Naive thymus-derived CD4-positive, alpha-beta T cell (primary cell): ENCODE measurements at regions of chr11 and their contacts with region 1.

Region 1: GRCh38 chr11:128026596-128026995 is 560.8 kb downstream of the ETS1 start:
- DNase-seq: no peak
- ATAC-seq: peak; percentile 34
- H3K4me3 ChIP-seq: no peak overlapping the region
- H3K4me3 Mint-ChIP-seq: no peak overlapping the region
- H3K27ac ChIP-seq: no peak overlapping the region
- H3K27ac Mint-ChIP-seq: peak overlapping the region in 1 of 9 donors; percentile 12
- H3K4me1 ChIP-seq: peaks cover 0 to under 1% of the 10 kb centered on the region in 2 donors
- H3K4me1 Mint-ChIP-seq: peaks cover 0 to 5% (median 3%) of the 10 kb centered on the region in 7 donors
- H3K27me3 ChIP-seq: no peaks in the 10 kb centered on the region
- H3K27me3 Mint-ChIP-seq: peaks cover 0 to 37% (median 2%) of the 10 kb centered on the region in 5 donors

Region 2: DNA sequence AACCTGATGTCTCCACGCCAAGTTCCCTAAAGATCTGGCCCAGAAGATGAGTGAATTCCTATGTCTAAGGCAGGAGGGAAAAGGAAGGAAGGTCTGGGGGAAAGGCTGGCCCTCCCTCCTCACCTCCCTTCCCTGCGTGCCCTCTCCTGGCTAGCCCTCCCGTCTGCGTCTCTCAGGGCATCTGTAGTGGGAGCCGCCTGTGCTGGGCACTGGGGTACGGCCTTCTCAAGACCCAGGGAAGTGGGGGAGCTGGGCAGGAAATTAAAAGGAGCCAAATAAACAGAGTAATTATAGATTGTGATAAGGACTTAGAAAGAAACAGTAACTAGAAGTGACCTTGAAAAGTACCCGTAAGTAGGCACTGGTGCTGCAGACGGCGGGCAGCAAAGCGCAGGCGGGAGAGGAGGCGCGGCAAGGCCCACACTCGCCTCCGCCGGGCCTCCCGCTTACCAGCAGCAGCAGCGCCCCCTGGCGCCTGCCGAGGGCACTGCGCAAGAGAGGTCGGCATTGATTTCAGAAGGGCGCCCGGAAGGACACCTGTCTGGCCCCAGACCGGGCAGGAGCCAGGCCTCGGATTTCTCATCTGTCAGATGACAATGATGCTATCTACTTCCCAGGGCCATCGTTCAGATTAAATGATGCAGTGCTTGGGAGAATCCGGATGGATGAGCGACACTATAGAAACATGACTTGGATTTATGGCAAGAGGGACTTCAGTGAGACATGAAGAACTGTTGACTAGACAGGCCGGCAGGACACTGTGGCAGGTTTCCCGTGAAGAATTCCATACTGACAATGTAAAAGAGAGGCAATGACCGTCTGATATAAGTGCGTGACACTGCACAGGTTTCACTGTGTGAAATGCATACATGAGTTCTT is 833.2 kb after region 1 on chr11:
- CTCF ChIA-PET with region 1: no interaction called
- POLR2A ChIA-PET with region 1: no interaction called
- intact Hi-C with region 1: loop called (anchors 1 kb)
- DNase-seq: peak; percentile 55 to 83 (median 66)
- ATAC-seq: peak; percentile 95
- H3K4me3 ChIP-seq: no peak overlapping the region
- H3K4me3 Mint-ChIP-seq: peak overlapping the region in 3 of 10 donors; percentile 12 to 26 (median 18)
- H3K27ac ChIP-seq: no peak overlapping the region
- H3K27ac Mint-ChIP-seq: no peak overlapping the region
- H3K4me1 ChIP-seq: peaks cover 0 to 4% of the 10 kb centered on the region in 2 donors
- H3K4me1 Mint-ChIP-seq: peaks cover 0 to 9% (median 5%) of the 10 kb centered on the region in 7 donors
- H3K27me3 ChIP-seq: no peaks in the 10 kb centered on the region
- H3K27me3 Mint-ChIP-seq: peaks cover 0 to 16% (median 0%) of the 10 kb centered on the region in 5 donors

Region 3: DNA sequence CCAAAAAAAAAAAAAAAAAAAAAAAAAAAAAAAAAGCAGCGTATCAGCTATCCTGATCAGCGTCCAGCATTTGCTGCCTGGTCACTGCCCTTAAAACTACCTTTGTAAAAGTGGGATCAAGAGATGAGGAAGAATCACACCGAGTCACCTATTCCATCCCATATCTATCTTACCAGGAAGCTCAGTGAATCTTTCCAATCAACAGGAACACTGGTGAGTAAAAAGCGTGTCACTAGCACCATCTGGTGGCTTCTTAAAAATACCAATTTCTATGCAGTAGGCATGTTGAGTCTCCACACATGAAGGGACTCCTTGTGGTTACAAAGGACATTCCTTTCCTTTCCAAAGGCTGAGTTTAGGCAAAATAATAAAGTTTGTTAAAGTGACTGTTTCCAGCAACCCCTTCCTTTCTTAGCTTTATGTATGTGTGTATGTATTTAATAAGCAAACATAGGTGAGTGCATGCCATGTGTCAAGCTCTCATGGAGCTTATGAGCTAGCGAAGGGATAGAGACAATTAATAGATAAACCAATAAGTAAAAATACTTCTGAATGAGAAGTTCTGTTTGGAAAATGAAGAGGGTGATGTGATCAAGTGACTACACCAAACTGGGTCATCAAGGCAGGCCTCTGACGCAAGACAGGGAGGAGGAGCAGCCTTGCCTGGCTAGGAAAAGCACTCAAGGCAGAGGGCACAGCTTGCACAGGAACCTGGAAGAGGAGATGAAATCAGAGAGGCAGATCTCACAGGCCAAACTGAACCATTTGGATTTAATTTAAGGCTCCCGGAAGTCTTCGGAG is 930.0 kb after region 1 on chr11:
- CTCF ChIA-PET with region 1: no interaction called
- POLR2A ChIA-PET with region 1: no interaction called
- intact Hi-C with region 1: loop called (anchors 1 to 10 kb)
- DNase-seq: peak in 6 of 9 donors; percentile 10 to 48 (median 34)
- ATAC-seq: peak; percentile 60
- H3K4me3 ChIP-seq: no peak overlapping the region
- H3K4me3 Mint-ChIP-seq: peak overlapping the region in 4 of 10 donors; percentile 15 to 52 (median 30)
- H3K27ac ChIP-seq: no peak overlapping the region
- H3K27ac Mint-ChIP-seq: no peak overlapping the region
- H3K4me1 ChIP-seq: no peaks in the 10 kb centered on the region
- H3K4me1 Mint-ChIP-seq: peaks cover 2 to 6% (median 4%) of the 10 kb centered on the region in 7 donors
- H3K27me3 ChIP-seq: no peaks in the 10 kb centered on the region
- H3K27me3 Mint-ChIP-seq: peaks cover 0 to 33% (median 8%) of the 10 kb centered on the region in 5 donors

Region 4: GRCh38 chr11:129815596-129816461 is 1789.2 kb after region 1 on chr11 and contains the start of gene TMEM45B:
- CTCF ChIA-PET with region 1: no interaction called
- POLR2A ChIA-PET with region 1: no interaction called
- intact Hi-C with region 1: no loop called
- DNase-seq: peak; percentile 27 to 57 (median 45)
- ATAC-seq: peak; percentile 38
- H3K4me3 ChIP-seq: peak within 1 kb of the TSS; percentile 54
- H3K4me3 Mint-ChIP-seq: peak within 1 kb of the TSS; percentile 83 to 91 (median 88)
- H3K27ac ChIP-seq: peak within 1 kb of the TSS; percentile 31
- H3K27ac Mint-ChIP-seq: peak within 1 kb of the TSS; percentile 84 to 99 (median 95)
- H3K4me1 ChIP-seq: peaks cover 5 to 9% of the 10 kb centered on the region in 2 donors
- H3K4me1 Mint-ChIP-seq: peaks cover 29 to 79% (median 61%) of the 10 kb centered on the region in 7 donors
- H3K27me3 ChIP-seq: no peaks in the 10 kb centered on the region
- H3K27me3 Mint-ChIP-seq: peaks cover 0 to 75% (median 17%) of the 10 kb centered on the region in 5 donors
- total RNA-seq, gene TMEM45B: 2.3 to 40.8 (median 3.6) TPM